ENCODE measurements at regions of chr12 and their contacts with region 1.

Region 1: GRCh38 chr12:101570047-101570446 is 24.7 kb upstream of the MYBPC1 start:
- DNase-seq: peak; percentile 63
- ATAC-seq: peak; percentile 94
- H3K4me3 ChIP-seq: no peak overlapping the region
- H3K27ac ChIP-seq: no peak overlapping the region
- H3K4me1 ChIP-seq: no peaks in the 10 kb centered on the region
- H3K27me3 ChIP-seq: no peaks in the 10 kb centered on the region; the same call in 1 of the 2 replicates
- CTCF ChIP-seq: peak; percentile 39
- POLR2A ChIP-seq: no peak
- RAD21 ChIP-seq: 0 out of 2 replicates have a peak, but pooled peaks have one; percentile 12

Region 2: GRCh38 chr12:101490286-101490920 is 79.6 kb before region 1 on chr12:
- CTCF ChIA-PET with region 1: no interaction called
- POLR2A ChIA-PET with region 1: no interaction called
- dilution Hi-C with region 1: no loop called
- in situ Hi-C with region 1: no loop called
- intact Hi-C with region 1: loop called (anchors 5 kb)
- DNase-seq: no peak
- ATAC-seq: peak; percentile 49; the same call in 1 of the 2 replicates
- H3K4me3 ChIP-seq: no peak overlapping the region
- H3K27ac ChIP-seq: no peak overlapping the region
- H3K4me1 ChIP-seq: no peaks in the 10 kb centered on the region
- H3K27me3 ChIP-seq: no peaks in the 10 kb centered on the region
- CTCF ChIP-seq: no peak
- POLR2A ChIP-seq: no peak
- RAD21 ChIP-seq: no peak